ENCODE measurements at regions of chr1 and their contacts with region 1.

Region 1: DNA sequence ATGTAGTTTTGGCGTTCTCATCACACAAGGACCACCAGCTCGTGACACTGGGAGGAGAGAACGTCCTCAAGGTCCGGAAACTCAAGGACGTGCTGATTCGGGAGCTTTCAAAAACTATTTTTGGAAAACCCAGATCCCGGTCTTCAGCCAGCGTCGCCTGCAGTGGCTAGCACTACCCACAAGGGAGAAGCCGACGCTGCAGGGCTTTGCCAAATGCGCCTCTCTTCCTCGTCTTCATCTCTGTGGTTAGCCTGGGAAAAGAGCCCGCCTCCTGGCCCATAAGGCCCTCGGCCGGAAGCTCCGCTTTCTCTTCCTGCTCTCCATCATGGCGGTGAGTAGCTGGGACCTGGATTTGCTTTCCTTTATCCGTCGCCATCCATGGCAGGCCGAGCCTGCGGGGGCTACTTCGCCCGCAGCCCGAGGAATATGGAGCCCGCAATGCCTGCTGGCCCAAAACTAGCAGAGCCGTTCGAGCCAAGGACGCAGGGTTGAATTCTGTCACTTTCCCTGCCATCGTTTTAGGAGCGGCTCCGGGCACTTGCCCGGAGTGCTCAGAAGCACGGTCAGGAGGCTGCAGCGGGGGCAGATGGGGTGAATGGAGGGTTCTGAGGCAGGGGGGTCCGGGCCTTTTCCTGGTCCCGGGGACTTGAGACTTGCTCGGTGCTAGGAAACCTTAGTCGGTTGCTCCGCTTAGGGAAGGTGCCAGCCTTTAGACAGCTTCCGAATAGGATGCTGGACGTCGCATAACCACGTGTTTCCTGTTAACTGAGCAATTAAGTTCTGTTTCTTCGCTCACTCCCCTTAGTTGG is at the start of gene RPL11:
- H3K4me3 ChIP-seq: peak within 1 kb of the TSS; percentile 99
- H3K27ac ChIP-seq: peak within 1 kb of the TSS; percentile 96
- H3K4me1 ChIP-seq: no peaks in the 10 kb centered on the region
- CTCF ChIP-seq: peak; percentile 51

Region 2: DNA sequence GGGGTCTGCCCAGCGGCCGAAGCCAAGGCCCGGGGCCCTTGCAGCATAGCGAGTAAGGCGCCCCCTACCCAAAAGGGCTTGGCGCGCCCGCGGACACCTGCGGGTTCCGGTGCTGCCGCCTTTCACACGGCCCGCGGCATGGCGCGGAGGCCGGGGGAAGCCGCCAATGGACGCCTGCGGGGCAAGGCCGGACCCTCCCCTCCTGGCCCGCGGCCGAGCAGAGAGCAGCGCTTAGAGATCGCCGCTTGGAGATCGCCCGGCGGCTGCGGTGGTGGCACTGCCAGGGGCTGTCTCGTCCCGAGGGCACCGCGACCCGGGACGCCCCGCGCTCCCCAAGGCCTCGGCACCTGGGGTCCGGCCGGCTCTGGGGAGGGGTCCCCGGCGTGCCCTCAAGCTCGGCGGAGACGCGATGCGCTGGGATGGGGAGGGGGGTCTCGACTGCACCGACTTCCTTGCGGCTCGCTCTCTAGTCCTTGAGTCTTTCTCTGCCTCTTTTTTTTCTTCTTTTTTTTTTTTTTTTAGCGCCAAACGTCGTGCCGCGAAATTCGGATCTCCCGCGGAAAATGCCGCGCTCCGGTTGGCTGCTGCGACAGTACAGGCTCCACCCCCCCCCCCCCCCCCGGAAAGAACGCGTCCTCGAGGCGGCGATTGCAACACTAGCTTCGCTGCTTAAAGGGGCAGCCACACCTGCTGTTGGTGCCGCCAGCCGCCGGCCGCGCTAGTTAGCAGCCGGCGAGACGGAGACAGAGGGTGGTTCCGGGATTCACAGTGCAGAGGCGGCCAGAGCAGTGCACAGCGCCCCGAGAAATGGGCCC is 160.7 kb before region 1 on chr1 and contains the start of gene E2F2:
- CTCF ChIA-PET with region 1: interaction called, 5 read pairs
- POLR2A ChIA-PET with region 1: interaction called, 17 read pairs
- H3K4me3 ChIP-seq: peak within 1 kb of the TSS; percentile 69
- H3K27ac ChIP-seq: peak within 1 kb of the TSS; percentile 89
- H3K4me1 ChIP-seq: peaks cover 2% of the 10 kb centered on the region; the same call in 1 of the 2 replicates
- CTCF ChIP-seq: peak; percentile 84

Region 3: DNA sequence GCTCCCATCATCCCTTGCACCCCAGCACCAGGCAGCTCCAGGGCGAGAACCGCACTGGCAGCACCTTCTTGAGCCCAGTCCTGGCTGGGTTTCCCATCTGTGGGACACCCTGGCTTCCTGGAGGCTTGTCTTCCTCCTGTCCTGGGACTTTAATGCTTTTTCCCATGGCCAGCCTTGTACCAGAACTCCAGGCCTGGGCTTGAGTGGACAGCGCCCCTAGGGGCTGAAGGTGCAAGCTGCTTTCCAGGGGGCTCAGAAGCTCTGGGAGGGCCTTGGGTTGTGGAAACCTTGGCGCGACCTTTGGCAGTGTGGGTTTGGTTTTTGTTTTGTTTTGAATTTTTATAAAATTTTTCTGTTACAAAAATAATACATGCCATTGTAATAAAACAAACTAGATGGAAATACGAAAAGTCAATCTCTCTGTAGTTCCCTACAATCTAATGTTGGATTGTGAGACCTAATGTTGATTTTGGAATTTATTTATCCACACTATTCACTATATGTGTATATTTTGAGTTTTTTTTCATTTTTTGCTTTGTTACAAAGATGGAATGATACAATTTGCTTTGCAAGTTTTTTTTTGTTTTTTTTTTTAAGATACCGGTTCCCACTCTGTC is 33.9 kb before region 1 on chr1:
- CTCF ChIA-PET with region 1: interaction called, 12 read pairs
- POLR2A ChIA-PET with region 1: interaction called, 6 read pairs
- H3K4me3 ChIP-seq: no peak overlapping the region
- H3K27ac ChIP-seq: no peak overlapping the region
- H3K4me1 ChIP-seq: no peaks in the 10 kb centered on the region
- CTCF ChIP-seq: peak; percentile 60

Region 4: DNA sequence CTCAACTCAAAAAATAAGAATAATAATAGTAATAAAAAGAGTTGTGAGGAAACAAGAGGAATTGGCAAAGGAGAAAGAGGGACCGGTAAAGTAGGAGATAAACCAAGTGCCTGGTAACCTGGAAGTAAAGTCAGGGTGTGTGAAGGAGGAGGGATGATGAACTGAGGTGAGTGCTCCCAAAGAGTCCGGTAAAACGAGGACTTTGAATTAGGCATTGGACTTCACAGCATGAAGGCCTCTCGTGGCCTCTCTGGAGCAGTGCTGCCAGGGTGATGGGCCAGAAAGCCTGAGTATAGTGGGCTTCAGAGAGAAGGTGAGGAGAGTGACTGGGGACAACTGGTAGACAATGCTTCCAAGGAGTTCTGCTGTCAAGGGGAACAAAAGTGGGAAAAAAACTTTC is 17.5 kb after region 1 on chr1:
- CTCF ChIA-PET with region 1: no interaction called
- POLR2A ChIA-PET with region 1: no interaction called
- H3K4me3 ChIP-seq: no peak overlapping the region
- H3K27ac ChIP-seq: no peak overlapping the region
- H3K4me1 ChIP-seq: no peaks in the 10 kb centered on the region
- CTCF ChIP-seq: no peak

Region 5: DNA sequence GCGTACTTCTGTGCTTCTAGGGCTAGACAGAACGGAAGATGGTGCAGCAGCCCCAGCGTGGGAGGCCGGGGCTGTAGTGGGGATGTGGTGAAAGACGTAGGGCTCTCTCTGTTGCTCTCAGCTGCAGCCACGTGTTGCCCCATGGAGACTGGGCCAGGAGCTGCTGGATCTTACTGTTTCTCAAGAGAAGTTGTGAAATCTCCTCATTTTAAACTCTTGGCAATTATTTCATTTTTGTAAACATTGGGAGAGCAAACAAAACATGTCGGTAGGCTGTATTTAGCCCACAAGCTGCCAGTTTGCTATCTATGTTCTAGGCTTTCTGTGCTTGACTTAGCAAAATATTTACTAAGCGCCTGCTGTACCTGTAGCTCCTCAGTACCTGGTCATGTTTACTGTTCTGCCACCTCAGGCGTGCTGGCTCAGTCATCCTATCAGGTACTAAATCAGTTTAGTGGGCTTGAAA is 35.7 kb after region 1 on chr1:
- CTCF ChIA-PET with region 1: no interaction called
- POLR2A ChIA-PET with region 1: no interaction called
- H3K4me3 ChIP-seq: no peak overlapping the region
- H3K27ac ChIP-seq: no peak overlapping the region
- H3K4me1 ChIP-seq: no peaks in the 10 kb centered on the region
- CTCF ChIP-seq: no peak

Region 6: DNA sequence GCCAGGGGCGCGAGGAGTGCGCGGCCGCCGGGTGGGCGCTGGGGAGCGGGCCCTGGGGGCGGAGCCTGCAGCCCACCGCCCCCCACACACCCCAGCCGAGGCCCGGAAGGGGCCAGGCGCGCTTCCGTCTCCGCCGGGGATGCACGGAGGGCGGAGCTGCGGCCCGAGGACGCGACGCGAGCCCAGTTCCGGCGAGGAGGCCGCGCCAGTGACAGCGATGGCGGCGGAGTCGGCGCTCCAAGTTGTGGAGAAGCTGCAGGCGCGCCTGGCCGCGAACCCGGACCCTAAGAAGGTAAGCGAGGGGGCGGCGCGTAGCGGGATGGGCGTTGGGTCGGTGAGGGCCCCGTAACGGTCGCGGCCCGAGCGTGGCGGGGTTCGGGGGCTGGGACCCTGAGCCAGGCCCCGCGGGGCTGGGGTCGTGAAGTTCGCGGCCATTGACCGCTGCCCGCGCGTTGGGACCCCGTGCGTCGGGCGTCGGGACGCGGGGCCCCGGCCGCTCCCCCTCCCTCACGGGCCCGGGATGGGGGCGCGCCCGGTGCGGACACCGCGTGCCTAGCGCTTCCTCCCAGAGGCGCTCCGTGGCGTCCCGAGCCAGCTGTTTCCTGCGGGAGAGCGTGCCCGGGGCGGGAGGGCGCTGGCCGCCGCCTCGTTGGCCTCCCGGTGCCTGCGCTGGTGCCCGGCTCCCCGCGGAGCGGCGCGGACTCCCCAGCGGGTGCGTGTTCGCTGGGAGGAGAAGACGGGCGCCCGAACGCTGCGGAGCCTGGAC is 51.8 kb after region 1 on chr1 and contains the start of gene ELOA:
- CTCF ChIA-PET with region 1: interaction called, 10 read pairs
- POLR2A ChIA-PET with region 1: interaction called, 17 read pairs
- H3K4me3 ChIP-seq: peak within 1 kb of the TSS; percentile 99
- H3K27ac ChIP-seq: peak within 1 kb of the TSS; percentile 84
- H3K4me1 ChIP-seq: peaks cover 5% of the 10 kb centered on the region
- CTCF ChIP-seq: 0 out of 2 replicates have a peak, but pooled peaks have one; percentile 28

Region 7: GRCh38 chr1:23925279-23925678 is 233.6 kb after region 1 on chr1:
- CTCF ChIA-PET with region 1: no interaction called
- POLR2A ChIA-PET with region 1: interaction called, 10 read pairs
- H3K4me3 ChIP-seq: no peak overlapping the region
- H3K27ac ChIP-seq: no peak overlapping the region
- H3K4me1 ChIP-seq: no peaks in the 10 kb centered on the region
- CTCF ChIP-seq: no peak